Body of pancreas (tissue), 4 donors: ENCODE measurements at regions of chr14 and their contacts with region 1.

Region 1: DNA sequence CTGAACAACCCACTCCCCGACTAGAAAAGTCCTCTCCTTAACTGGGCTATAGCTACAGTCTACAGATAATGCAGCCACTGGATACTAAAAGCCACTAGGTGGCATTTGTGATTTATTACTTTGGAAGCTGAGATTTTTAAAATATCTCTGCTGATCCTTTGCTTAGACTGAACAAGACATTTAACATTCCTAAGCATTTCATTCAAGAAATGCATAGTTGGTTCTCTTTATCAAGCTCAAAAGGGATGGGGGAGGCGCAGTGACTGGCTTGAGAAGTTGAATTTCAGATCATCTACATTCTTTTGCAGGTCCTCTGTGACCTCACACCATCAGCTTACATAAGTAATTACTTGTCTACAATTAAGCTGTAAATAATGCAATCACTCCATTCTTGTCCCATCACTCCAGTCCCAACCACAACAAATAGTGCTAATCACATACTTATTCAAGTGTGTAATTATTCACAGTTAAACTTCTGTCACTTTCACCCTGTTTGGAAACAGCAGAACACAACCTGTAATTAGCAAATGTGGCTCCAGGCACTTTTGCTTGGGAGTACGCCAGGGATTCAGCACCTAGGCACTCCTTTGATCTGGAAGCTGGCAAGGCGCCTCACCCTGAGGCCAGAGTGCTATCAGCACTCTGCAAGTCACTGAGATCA is 203.6 kb downstream of the NOVA1 start:
- DNase-seq: peak in 3 of 4 donors; percentile 6 to 26 (median 19)
- ATAC-seq: no peak
- H3K4me3 ChIP-seq: no peak overlapping the region
- H3K27ac ChIP-seq: no peak overlapping the region
- H3K4me1 ChIP-seq: no peaks in the 10 kb centered on the region
- H3K27me3 ChIP-seq: no peaks in the 10 kb centered on the region
- CTCF ChIP-seq: peak in 6 of 7 experiments; percentile 15 to 49 (median 36)
- POLR2A ChIP-seq: no peak

Region 2: GRCh38 chr14:26984311-26985177 is 590.3 kb after region 1 on chr14:
- intact Hi-C with region 1: loop called (anchors 10 kb)
- DNase-seq: peak; percentile 69 to 78 (median 72)
- ATAC-seq: peak; percentile 81
- H3K4me3 ChIP-seq: no peak overlapping the region
- H3K27ac ChIP-seq: no peak overlapping the region
- H3K4me1 ChIP-seq: no peaks in the 10 kb centered on the region
- H3K27me3 ChIP-seq: no peaks in the 10 kb centered on the region
- CTCF ChIP-seq: peak; percentile 24 to 70 (median 63)
- POLR2A ChIP-seq: no peak